ENCODE measurements at regions of chrX and their contacts with region 1.

Region 1: DNA sequence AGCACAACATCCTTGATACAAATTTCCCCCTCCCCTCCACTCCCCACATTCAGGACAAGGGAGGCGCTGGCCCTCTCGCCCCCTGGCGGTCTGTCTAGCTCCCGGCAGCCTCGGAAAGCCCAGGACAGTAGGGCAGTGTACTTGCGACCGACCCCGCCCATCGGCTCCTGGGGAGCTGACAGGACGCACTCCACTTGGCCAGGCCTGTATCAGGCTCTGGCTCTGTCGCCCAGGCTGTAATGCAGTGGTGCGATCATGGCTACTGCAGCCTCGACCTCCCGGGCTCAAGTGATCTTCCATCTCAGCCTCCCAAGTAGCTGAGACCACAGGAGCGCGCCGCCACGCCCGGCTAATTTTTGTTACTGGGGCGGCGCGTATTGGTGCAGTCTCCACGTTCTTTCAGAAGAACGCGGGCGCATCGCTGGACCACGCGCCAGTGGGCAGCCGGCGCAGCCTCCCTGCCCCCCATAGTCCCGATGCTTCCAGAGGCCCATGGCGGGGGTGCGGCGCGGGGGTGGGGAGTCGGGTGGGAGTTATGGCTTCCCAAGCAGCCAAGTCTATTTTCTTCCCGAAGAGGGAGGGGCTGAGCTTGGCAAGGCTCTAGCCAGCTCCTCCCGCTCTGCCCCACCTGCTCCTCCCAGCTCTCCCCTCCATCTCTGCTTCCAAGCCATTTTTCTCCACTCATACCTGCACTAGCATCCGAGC is 7.8 kb upstream of the AKAP14 start:
- DNase-seq: peak; percentile 78 to 84
- ATAC-seq: peak; percentile 99
- H3K4me3 ChIP-seq: peak overlapping the region; percentile 57
- H3K27ac ChIP-seq: peak overlapping the region; percentile 62 to 87
- H3K4me1 ChIP-seq: no peaks in the 10 kb centered on the region
- CTCF ChIP-seq: peak; percentile 53
- EP300 ChIP-seq: no peak
- POLR2A ChIP-seq: no peak
- RAD21 ChIP-seq: peak; percentile 21 to 41; a peak in 3 of 5 replicates

Region 2: DNA sequence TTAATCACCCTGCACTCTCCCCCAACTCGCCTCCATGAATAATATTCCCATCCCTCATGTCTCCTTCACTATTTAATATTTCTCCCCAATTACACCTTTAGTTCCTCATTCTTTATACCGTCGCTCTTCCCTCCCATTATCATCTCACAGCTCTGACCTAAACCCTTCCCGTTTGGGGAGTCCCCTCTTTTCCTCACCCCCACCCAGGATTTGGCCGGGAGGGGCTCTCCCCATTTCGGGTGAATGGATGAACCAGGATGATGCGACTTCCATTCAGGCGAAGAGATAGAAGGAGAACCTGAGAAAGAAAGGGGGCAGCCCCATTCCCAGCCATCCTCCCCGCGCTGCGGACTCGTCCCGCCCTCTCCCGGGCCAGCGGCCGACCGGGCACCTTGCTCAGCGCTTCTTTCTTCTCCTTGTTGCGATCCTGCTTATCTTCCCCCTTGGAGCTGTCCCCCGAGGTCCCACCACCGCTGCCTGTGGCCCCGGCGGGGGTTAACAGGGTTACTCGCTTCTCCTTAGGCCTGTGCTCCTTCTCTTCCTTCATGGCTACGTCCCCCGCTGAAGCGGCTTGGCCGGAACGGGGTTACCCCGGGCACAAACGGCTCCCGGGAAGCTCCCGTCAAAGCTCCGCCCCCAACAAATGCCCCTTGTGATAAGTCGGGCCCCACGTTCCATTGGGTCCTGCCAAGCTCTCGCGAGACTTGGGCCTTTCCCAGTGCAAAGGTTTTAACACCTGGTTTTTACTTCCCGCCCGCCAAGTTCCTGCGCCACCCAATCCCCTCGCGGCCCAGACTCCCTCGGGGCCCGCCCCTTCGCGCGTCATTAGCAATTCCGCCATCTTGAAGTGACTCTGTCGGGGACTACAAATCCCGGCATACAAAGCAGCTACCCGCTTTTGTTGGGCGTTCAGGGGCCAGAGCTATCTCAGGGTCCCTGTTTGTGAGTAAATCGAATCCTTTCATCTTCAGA is 35.2 kb before region 1 on chrX and contains the start of gene UPF3B:
- CTCF ChIA-PET with region 1: interaction called, 10 read pairs
- POLR2A ChIA-PET with region 1: interaction called, 3 read pairs
- DNase-seq: peak; percentile 98 to 99
- ATAC-seq: peak; percentile 94 to 96
- H3K4me3 ChIP-seq: peak within 1 kb of the TSS; percentile 68
- H3K27ac ChIP-seq: peak within 1 kb of the TSS; percentile 89 to 94
- H3K4me1 ChIP-seq: no peaks in the 10 kb centered on the region
- CTCF ChIP-seq: no peak
- EP300 ChIP-seq: no peak
- POLR2A ChIP-seq: peak; percentile 79
- RAD21 ChIP-seq: no peak
- polyA plus RNA-seq, gene UPF3B: 14.3 and 27.6 TPM in 2 replicates

Region 3: GRCh38 chrX:119935215-119935874 is 47.5 kb after region 1 on chrX:
- CTCF ChIA-PET with region 1: interaction called, 11 read pairs
- POLR2A ChIA-PET with region 1: no interaction called
- DNase-seq: no peak
- ATAC-seq: no peak
- H3K4me3 ChIP-seq: no peak overlapping the region
- H3K27ac ChIP-seq: no peak overlapping the region
- H3K4me1 ChIP-seq: no peaks in the 10 kb centered on the region
- CTCF ChIP-seq: no peak
- EP300 ChIP-seq: no peak
- POLR2A ChIP-seq: no peak
- RAD21 ChIP-seq: no peak

Region 4: DNA sequence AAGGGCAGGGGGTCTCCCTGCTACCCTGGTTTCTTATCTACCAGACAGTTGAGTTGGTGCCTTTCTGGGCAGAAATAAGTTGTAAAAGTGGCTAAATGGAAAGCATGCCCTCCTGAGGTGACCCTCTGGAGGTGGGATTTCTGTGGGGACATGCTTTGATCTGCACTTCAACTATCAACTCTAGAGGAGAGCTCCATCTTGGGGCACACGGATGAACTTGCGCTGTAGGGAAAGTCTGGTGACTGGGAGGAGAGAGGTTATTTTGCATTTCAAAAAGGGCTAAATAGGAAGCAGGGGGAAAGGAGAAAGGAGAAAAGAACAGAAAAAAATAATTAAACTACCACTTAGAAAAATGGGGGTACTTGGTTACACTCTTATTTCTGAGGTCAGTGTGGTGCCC is 202.3 kb after region 1 on chrX:
- CTCF ChIA-PET with region 1: no interaction called
- POLR2A ChIA-PET with region 1: no interaction called
- DNase-seq: peak in 1 of 2 experiments; percentile 2
- ATAC-seq: peak in 1 of 2 experiments; percentile 34; a peak in 1 of 6 replicates
- H3K4me3 ChIP-seq: no peak overlapping the region
- H3K27ac ChIP-seq: no peak overlapping the region
- H3K4me1 ChIP-seq: no peaks in the 10 kb centered on the region
- CTCF ChIP-seq: no peak
- EP300 ChIP-seq: no peak
- POLR2A ChIP-seq: no peak
- RAD21 ChIP-seq: no peak